ENCODE measurements at regions of chr7 and their contacts with region 1.

Region 1: GRCh38 chr7:124171068-124171467 is 138.2 kb upstream of the TMEM229A start:
- DNase-seq: peak; percentile 66
- ATAC-seq: peak; percentile 84
- H3K4me3 ChIP-seq: no peak overlapping the region
- H3K27ac ChIP-seq: no peak overlapping the region
- H3K4me1 ChIP-seq: peaks cover 3% of the 10 kb centered on the region
- H3K27me3 ChIP-seq: no peaks in the 10 kb centered on the region
- CTCF ChIP-seq: peak; percentile 80

Region 2: DNA sequence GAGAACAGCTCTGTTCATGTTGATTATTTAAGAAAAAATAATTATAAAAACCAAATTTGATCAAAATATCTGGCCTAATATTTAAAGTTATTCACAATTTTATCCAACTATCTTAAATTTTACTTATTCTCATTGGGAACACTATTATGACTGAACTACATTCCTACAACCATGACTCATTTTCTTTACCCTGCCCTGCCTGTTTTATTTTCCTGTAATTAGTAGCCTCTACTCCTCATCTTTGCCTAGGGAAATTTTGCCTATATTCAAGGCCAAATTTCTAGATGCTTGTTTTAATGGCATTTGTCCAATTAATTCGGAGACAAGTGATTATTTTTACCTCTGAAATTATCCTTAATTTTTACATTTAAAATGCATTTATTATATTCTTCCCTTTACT is 151.5 kb after region 1 on chr7:
- CTCF ChIA-PET with region 1: no interaction called
- POLR2A ChIA-PET with region 1: no interaction called
- intact Hi-C with region 1: loop called (anchors 1 kb)
- DNase-seq: peak; percentile 62
- ATAC-seq: peak; percentile 29; the same call in 1 of the 2 replicates
- H3K4me3 ChIP-seq: no peak overlapping the region
- H3K27ac ChIP-seq: no peak overlapping the region
- H3K4me1 ChIP-seq: peaks cover 47% of the 10 kb centered on the region
- H3K27me3 ChIP-seq: no peaks in the 10 kb centered on the region
- CTCF ChIP-seq: no peak

Region 3: GRCh38 chr7:124459101-124460055 is 288.3 kb after region 1 on chr7:
- CTCF ChIA-PET with region 1: no interaction called
- POLR2A ChIA-PET with region 1: no interaction called
- intact Hi-C with region 1: loop called (anchors 10 kb)
- DNase-seq: no peak
- ATAC-seq: no peak
- H3K4me3 ChIP-seq: no peak overlapping the region
- H3K27ac ChIP-seq: no peak overlapping the region
- H3K4me1 ChIP-seq: peaks cover 20% of the 10 kb centered on the region
- H3K27me3 ChIP-seq: no peaks in the 10 kb centered on the region
- CTCF ChIP-seq: no peak

Region 4: GRCh38 chr7:124723012-124723411 is 551.9 kb after region 1 on chr7:
- CTCF ChIA-PET with region 1: no interaction called
- POLR2A ChIA-PET with region 1: no interaction called
- intact Hi-C with region 1: loop called (anchors 5 kb)
- DNase-seq: peak; percentile 88
- ATAC-seq: peak; percentile 63
- H3K4me3 ChIP-seq: peak overlapping the region; percentile 21; the same call in 1 of the 2 replicates
- H3K27ac ChIP-seq: peak overlapping the region; percentile 95
- H3K4me1 ChIP-seq: peaks cover 63% of the 10 kb centered on the region
- H3K27me3 ChIP-seq: no peaks in the 10 kb centered on the region
- CTCF ChIP-seq: no peak

Region 5: GRCh38 chr7:124784879-124785818 is 614.1 kb after region 1 on chr7:
- CTCF ChIA-PET with region 1: no interaction called
- POLR2A ChIA-PET with region 1: no interaction called
- intact Hi-C with region 1: loop called (anchors 1 kb)
- DNase-seq: peak; percentile 66
- ATAC-seq: peak; percentile 38
- H3K4me3 ChIP-seq: no peak overlapping the region
- H3K27ac ChIP-seq: no peak overlapping the region
- H3K4me1 ChIP-seq: peaks cover 8% of the 10 kb centered on the region; the same call in 1 of the 2 replicates
- H3K27me3 ChIP-seq: no peaks in the 10 kb centered on the region
- CTCF ChIP-seq: peak; percentile 92

Region 6: GRCh38 chr7:124856299-124856888 is 685.3 kb after region 1 on chr7:
- CTCF ChIA-PET with region 1: no interaction called
- POLR2A ChIA-PET with region 1: no interaction called
- intact Hi-C with region 1: loop called (anchors 5 kb)
- DNase-seq: peak; percentile 67
- ATAC-seq: peak; percentile 51
- H3K4me3 ChIP-seq: no peak overlapping the region
- H3K27ac ChIP-seq: no peak overlapping the region
- H3K4me1 ChIP-seq: no peaks in the 10 kb centered on the region
- H3K27me3 ChIP-seq: no peaks in the 10 kb centered on the region
- CTCF ChIP-seq: peak; percentile 81

Measured in PC-3 (cell line).